ENCODE measurements at regions of chr1 and their contacts with region 1.

Region 1: GRCh38 chr1:66764994-66765578 is 12.8 kb downstream of the DYNLT5 start:
- DNase-seq: peak; percentile 72
- H3K4me3 ChIP-seq: no peak overlapping the region
- H3K27ac ChIP-seq: no peak overlapping the region
- H3K27me3 ChIP-seq: no peaks in the 10 kb centered on the region
- CTCF ChIP-seq: peak; percentile 64

Region 2: DNA sequence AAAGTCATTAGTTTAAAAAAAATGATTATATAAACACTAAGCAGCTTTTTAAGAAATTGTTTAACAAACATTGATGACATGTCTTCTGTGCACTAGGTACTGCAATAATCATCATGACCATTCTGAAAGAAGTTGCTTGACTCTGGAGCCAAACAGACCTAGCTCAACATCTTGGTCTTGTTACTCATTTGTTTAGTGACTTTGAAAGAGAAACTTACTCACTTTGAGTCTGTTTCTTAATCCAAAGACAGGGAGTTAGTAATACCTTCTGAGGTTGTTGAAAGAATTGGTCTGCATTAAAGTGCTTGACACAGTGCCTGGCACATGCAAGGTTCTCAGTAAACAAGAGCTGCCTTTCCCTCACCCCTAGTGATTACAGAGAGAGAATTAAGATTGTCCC is 146.7 kb before region 1 on chr1:
- in situ Hi-C with region 1: no loop called
- DNase-seq: no peak
- H3K4me3 ChIP-seq: no peak overlapping the region
- H3K27ac ChIP-seq: no peak overlapping the region
- H3K27me3 ChIP-seq: no peaks in the 10 kb centered on the region
- CTCF ChIP-seq: no peak

Region 3: DNA sequence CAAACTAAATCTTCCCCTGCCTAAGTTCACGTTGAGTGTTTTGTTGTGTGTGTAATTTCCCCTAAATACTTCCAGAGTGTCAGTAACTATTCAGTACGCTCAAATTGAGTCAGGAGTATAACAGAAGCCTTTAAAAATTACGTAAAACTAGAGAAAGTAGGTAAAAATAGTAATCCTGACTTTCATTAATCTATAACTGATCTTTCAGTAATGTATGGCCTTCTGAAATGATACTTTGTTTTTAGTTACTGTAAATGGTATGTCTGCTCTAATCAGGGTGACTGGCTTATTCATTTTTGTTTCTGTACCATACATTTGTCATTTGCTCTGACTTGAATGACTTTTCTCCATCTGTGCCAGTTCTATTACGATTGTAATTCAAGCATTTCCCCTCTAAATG is 189.1 kb after region 1 on chr1:
- in situ Hi-C with region 1: loop called (anchors 25 kb)
- DNase-seq: no peak
- H3K4me3 ChIP-seq: no peak overlapping the region
- H3K27ac ChIP-seq: peak overlapping the region; percentile 10
- H3K27me3 ChIP-seq: no peaks in the 10 kb centered on the region
- CTCF ChIP-seq: no peak

Region 4: DNA sequence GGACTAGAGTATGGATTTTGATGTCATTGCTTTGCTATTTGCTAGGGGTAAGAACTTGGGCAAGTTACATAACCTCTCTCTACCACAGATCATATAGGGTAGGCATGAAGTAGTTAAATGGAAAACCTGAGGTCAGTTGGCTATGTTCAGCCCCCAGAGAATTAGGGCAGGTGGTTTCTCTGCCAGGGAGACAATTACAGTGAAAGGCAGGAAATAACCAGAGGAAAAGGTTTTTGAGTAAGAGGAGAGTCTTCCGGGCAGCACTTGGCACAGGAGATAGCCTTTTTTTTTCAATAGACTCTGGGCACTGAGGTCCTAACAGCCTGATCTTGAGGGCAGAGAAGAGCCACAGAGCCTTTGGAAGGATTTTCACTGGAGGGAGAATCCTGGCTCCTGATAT is 681.8 kb after region 1 on chr1:
- in situ Hi-C with region 1: no loop called
- DNase-seq: no peak
- H3K4me3 ChIP-seq: no peak overlapping the region
- H3K27ac ChIP-seq: no peak overlapping the region
- H3K27me3 ChIP-seq: no peaks in the 10 kb centered on the region
- CTCF ChIP-seq: no peak